Activated B cell treated with CpG ODN at 0.5 μM for 24 hours (primary cell): ENCODE measurements at regions of chr10 and their contacts with region 1.

Region 1: DNA sequence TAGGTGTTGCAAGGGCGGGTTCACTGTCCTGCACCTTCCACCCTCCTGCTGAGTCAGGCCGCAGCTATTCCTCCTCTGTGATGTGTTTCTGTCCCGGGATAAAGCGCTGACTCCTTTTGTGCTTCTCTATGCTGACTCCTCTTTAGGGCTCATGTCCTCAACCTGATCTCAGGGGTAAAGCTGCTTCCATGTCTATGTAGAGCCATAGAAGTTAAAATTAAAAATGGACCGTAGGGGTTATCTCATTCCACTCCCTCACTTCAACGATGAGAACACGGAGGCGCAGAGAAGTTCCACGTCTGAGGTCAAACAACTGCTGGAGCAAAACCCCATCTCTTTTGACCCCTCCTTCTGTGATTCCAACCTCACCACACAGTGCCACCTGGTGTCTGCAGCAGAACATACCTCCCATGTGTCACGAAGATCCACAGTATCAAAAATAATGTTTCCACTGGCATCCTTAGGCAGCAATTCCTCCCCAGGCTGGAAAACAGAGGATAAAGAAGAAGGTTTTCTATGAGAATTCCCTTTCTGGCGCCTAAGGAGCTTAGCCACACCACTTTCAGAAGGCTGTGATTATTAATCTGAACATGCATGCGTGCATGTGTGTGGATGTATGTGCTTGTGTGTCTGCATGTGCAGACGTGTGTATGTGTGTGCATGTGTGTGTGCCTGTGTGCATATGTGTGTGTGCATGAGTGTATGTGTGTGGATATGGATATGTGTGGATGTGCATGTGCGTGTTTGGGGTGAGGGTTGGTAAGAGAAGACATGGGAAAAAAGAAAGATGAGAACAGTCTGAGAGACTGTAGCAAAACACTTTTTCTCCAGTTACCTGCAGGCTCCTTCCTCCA is 81.2 kb upstream of the UCN3 start:
- DNase-seq: no peak
- ATAC-seq: no peak
- H3K4me3 Mint-ChIP-seq: no peak overlapping the region
- H3K27ac Mint-ChIP-seq: no peak overlapping the region
- H3K4me1 Mint-ChIP-seq: no peaks in the 10 kb centered on the region
- H3K27me3 Mint-ChIP-seq: peaks cover 10% of the 10 kb centered on the region
- CTCF ChIP-seq: no peak

Region 2: DNA sequence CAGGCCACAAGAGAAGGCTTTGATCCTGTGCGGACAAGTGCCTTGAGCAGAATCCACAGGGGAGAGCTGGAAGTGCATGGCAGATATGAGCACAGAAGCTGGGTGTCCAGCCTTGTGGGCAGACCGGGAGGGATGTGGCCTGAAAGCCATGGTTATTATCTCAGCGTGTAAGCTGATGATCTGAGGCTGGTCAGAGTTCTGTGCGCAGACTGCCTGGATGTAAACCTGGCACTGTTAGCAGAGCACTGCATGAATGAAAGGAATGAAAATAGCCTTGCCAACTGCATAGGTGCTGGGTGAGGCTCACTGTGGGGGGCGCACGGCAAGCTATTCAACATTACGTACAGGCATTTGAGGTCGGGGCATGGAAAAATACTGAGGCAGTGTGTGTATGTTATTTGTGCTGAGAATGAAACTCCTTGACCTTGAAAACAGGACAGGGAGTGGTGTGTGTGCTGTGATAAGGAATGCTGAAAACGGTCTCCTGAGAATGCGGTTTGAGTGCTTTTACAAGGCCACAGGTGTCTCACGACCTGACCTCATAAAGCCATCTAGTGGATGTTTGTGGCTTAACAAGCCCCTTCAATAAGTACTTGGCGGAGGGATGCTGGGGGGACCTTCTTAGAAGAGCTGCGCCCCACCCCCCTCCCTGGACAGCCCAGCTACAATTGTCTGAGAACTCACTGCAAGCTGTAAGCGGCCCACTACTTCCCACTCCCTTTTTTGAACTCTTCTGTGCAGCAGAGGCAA is 301.6 kb before region 1 on chr10:
- CTCF ChIA-PET with region 1: no interaction called
- POLR2A ChIA-PET with region 1: no interaction called
- intact Hi-C with region 1: loop called (anchors 5 kb)
- DNase-seq: no peak
- ATAC-seq: no peak
- H3K4me3 Mint-ChIP-seq: no peak overlapping the region
- H3K27ac Mint-ChIP-seq: no peak overlapping the region
- H3K4me1 Mint-ChIP-seq: no peaks in the 10 kb centered on the region
- H3K27me3 Mint-ChIP-seq: no peaks in the 10 kb centered on the region
- CTCF ChIP-seq: no peak

Region 3: GRCh38 chr10:5206799-5207198 is 76.7 kb before region 1 on chr10:
- CTCF ChIA-PET with region 1: no interaction called
- POLR2A ChIA-PET with region 1: no interaction called
- intact Hi-C with region 1: no loop called
- DNase-seq: no peak
- ATAC-seq: no peak
- H3K4me3 Mint-ChIP-seq: no peak overlapping the region
- H3K27ac Mint-ChIP-seq: no peak overlapping the region
- H3K4me1 Mint-ChIP-seq: no peaks in the 10 kb centered on the region
- H3K27me3 Mint-ChIP-seq: peaks cover 2% of the 10 kb centered on the region
- CTCF ChIP-seq: no peak

Region 4: GRCh38 chr10:5260828-5261227 is 22.7 kb before region 1 on chr10:
- CTCF ChIA-PET with region 1: no interaction called
- POLR2A ChIA-PET with region 1: no interaction called
- intact Hi-C with region 1: no loop called
- DNase-seq: no peak
- ATAC-seq: no peak
- H3K4me3 Mint-ChIP-seq: no peak overlapping the region
- H3K27ac Mint-ChIP-seq: no peak overlapping the region
- H3K4me1 Mint-ChIP-seq: no peaks in the 10 kb centered on the region
- H3K27me3 Mint-ChIP-seq: no peaks in the 10 kb centered on the region
- CTCF ChIP-seq: no peak